ENCODE measurements at regions of chr14 and their contacts with region 1.

Region 1: DNA sequence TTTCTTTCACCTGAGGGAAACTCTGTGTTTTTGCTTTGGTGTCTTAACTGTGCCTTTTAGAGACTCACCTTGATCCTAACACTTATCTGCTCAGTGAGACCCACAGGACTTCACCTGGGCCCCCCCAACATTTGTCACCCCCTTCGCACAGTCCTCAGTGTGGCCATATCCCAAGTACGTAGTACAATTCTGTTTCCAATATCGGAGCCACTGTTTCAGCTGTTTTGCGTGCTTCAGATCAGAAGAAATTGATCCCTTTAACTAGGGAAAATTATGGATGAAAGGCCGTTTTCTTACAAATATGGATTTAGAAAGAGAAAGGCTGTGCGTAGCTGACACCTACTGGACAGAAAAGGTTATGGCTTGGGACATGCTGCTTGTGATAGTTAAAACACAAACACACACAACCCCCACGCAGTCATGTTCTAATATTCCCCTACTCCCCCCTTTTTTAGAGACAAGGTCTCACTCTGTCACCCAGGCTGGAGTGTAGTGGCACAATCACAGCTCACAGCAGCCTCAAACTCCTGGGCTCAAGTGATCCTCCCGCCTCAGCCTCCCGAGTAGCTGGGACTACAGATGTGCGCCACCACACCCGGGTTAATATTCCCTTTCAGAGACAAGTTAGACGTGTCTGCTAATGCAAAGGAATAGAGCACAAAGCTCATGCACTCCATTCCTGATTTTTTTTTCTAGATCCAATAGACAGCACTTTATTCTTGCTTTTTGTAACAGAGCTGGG is 3.6 kb upstream of the SLC7A8 start:
- DNase-seq: peak; percentile 76
- ATAC-seq: peak; percentile 88
- H3K4me3 ChIP-seq: no peak overlapping the region
- H3K27ac ChIP-seq: no peak overlapping the region
- H3K4me1 ChIP-seq: no peaks in the 10 kb centered on the region
- H3K27me3 ChIP-seq: peaks cover 15% of the 10 kb centered on the region
- CTCF ChIP-seq: peak; percentile 95
- POLR2A ChIP-seq: no peak
- RAD21 ChIP-seq: peak; percentile 94

Region 2: DNA sequence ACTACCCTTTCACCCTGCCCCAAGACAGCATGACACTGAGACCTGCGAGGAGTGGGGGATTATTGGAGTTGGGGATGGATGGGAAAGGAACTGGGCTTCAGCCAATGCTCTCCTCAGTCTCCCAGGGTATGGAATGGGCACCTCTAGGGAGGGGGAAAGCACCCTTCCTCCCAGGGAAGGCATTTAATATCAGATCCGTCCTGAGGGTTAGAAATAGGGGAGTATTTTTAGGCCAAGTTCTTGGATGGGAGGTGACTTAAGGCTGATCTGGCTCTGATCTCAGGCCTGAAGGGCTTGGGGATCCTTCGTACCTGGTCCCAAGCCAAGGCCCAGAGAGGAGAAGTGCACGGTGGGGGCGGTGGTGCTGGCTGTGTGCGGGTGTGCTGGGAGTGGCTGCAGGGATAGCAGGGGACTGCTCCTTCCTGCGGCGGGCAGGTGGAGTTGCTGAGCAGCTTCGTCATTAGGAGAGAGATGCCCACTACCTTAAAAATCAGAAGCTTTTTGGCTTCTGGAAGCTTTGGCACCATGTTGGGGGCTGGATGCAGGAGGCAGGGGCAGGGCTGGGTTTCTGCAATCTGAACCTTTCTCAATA is 61.1 kb before region 1 on chr14:
- CTCF ChIA-PET with region 1: interaction called, 76 read pairs
- POLR2A ChIA-PET with region 1: interaction called, 3 read pairs
- dilution Hi-C with region 1: no loop called
- in situ Hi-C with region 1: loop called (anchors 5 kb)
- intact Hi-C with region 1: no loop called
- DNase-seq: no peak
- ATAC-seq: no peak
- H3K4me3 ChIP-seq: no peak overlapping the region
- H3K27ac ChIP-seq: no peak overlapping the region
- H3K4me1 ChIP-seq: 0 out of 2 replicates have a peak, but pooled peaks cover 3% of the 10 kb centered on the region
- H3K27me3 ChIP-seq: peaks cover 23% of the 10 kb centered on the region
- CTCF ChIP-seq: no peak
- POLR2A ChIP-seq: no peak
- RAD21 ChIP-seq: no peak

Region 3: DNA sequence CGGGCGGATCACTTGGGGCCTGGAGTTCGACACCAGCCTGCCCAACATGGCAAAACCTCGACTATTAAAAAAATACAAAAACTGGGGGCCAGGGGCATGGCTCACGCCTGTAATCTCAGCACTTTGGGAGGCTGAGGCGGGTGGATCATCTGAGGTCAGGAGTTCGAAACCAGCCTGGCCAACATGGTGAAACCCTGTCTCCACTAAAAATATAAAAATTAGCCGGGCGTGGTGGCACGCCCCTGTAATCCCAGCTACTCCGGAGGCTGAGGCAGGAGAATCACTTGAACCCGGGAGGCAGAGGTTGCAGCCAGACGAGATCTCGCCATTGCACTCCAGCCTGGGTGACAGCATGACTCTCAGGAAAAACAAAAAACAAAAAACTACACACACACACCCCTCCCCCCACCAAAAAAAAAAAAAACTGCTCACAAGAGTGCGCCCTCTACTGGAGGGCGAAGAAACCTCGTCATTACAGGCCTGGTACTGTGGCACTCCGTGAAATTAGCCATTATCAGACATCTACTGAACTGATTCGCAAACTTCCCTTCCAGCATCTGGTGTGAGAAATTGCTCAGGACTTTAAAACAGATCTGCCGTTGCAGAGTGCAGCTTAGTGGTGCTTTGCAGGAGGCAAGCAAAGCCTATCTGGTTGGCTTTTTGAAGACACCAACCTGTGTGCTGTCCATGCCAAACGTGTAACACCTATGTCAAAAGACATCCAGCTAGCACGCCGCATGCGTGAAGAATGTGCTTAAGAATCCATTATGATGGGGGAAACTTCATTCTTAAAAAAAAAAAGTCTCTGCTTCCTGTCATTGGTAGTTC is 107.9 kb after region 1 on chr14:
- CTCF ChIA-PET with region 1: no interaction called
- POLR2A ChIA-PET with region 1: no interaction called
- dilution Hi-C with region 1: no loop called
- in situ Hi-C with region 1: no loop called
- intact Hi-C with region 1: loop called (anchors 5 kb)
- DNase-seq: peak; percentile 51
- ATAC-seq: peak; percentile 79
- H3K4me3 ChIP-seq: no peak overlapping the region
- H3K27ac ChIP-seq: no peak overlapping the region
- H3K4me1 ChIP-seq: peaks cover 2% of the 10 kb centered on the region
- H3K27me3 ChIP-seq: peaks cover 3% of the 10 kb centered on the region; the same call in 1 of the 2 replicates
- CTCF ChIP-seq: peak; percentile 87
- POLR2A ChIP-seq: no peak
- RAD21 ChIP-seq: peak; percentile 45

Measured in IMR-90 (cell line).